ENCODE measurements at regions of chr2 and their contacts with region 1.

Region 1: GRCh38 chr2:134181210-134181609 is 72.7 kb upstream of the MGAT5 start:
- DNase-seq: peak; percentile 78 to 87 (median 80)
- H3K4me3 ChIP-seq: peak overlapping the region in 1 of 2 donors; percentile 20
- H3K4me3 Mint-ChIP-seq: peak overlapping the region; percentile 46 to 81 (median 68)
- H3K27ac ChIP-seq: peak overlapping the region; percentile 25
- H3K27ac Mint-ChIP-seq: peak overlapping the region; percentile 89 to 97 (median 93)
- H3K4me1 ChIP-seq: peaks cover 97% of the 10 kb centered on the region
- H3K4me1 Mint-ChIP-seq: peaks cover 83 to 98% (median 90%) of the 10 kb centered on the region in 4 donors
- H3K27me3 ChIP-seq: no peaks in the 10 kb centered on the region
- H3K27me3 Mint-ChIP-seq: no peaks in the 10 kb centered on the region

Region 2: GRCh38 chr2:134137182-134137611 is 44.0 kb before region 1 on chr2:
- CTCF ChIA-PET with region 1: no interaction called
- POLR2A ChIA-PET with region 1: interaction called, 3 read pairs
- intact Hi-C with region 1: loop called (anchors 5 kb)
- DNase-seq: no peak
- H3K4me3 ChIP-seq: no peak overlapping the region
- H3K4me3 Mint-ChIP-seq: peak overlapping the region; percentile 32 to 88 (median 77)
- H3K27ac ChIP-seq: no peak overlapping the region
- H3K27ac Mint-ChIP-seq: peak overlapping the region in 5 of 7 donors; percentile 68 to 91 (median 82)
- H3K4me1 ChIP-seq: peaks cover 92% of the 10 kb centered on the region
- H3K4me1 Mint-ChIP-seq: peaks cover 79 to 99% (median 88%) of the 10 kb centered on the region in 4 donors
- H3K27me3 ChIP-seq: no peaks in the 10 kb centered on the region
- H3K27me3 Mint-ChIP-seq: no peaks in the 10 kb centered on the region

Region 3: DNA sequence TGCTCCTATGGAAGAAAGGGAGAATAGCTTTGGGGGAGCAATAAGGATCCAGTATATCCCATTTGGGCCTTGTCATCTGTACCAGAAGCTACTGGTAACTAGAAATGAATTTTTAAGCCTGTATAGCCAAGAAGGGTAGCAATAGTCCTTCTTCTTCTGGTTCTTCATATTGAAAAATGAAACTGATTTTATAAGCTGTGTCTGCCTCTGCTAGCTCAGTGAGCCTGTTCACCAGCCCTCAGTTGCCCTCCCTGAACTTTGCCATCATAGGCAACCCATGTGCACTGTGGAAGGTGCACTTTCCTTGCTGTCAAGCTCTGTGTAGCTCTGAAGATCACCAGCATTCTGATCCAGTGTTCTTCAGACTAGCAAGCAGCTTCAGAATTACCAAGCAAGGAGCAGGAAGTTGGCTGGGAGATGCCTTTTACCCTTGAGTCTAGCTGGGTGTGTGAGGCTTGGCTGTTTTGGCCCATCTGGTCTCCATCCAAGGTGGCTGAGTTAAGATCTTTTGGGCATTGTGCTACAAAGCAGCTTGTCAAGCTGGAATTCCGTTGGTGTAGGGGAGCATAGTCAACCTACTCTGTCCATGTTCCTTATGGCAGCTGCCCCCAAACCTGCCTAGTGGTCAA is 16.9 kb after region 1 on chr2:
- CTCF ChIA-PET with region 1: interaction called, 12 read pairs
- POLR2A ChIA-PET with region 1: interaction called, 17 read pairs
- intact Hi-C with region 1: loop called (anchors 2 kb)
- DNase-seq: no peak
- H3K4me3 ChIP-seq: no peak overlapping the region
- H3K4me3 Mint-ChIP-seq: peak overlapping the region; percentile 18 to 82 (median 74)
- H3K27ac ChIP-seq: no peak overlapping the region
- H3K27ac Mint-ChIP-seq: peak overlapping the region; percentile 72 to 88 (median 83)
- H3K4me1 ChIP-seq: peaks cover 87% of the 10 kb centered on the region
- H3K4me1 Mint-ChIP-seq: peaks cover 73 to 94% (median 84%) of the 10 kb centered on the region in 4 donors
- H3K27me3 ChIP-seq: no peaks in the 10 kb centered on the region
- H3K27me3 Mint-ChIP-seq: no peaks in the 10 kb centered on the region

Region 4: GRCh38 chr2:134218930-134219658 is 37.9 kb after region 1 on chr2:
- CTCF ChIA-PET with region 1: interaction called, 3 read pairs
- POLR2A ChIA-PET with region 1: interaction called, 12 read pairs
- intact Hi-C with region 1: loop called (anchors 5 kb)
- DNase-seq: peak in 4 of 5 donors; percentile 40 to 56 (median 48)
- H3K4me3 ChIP-seq: peak overlapping the region; percentile 12 to 13
- H3K4me3 Mint-ChIP-seq: peak overlapping the region; percentile 80 to 90 (median 84)
- H3K27ac ChIP-seq: peak overlapping the region; percentile 41
- H3K27ac Mint-ChIP-seq: peak overlapping the region; percentile 85 to 97 (median 90)
- H3K4me1 ChIP-seq: peaks cover 60% of the 10 kb centered on the region
- H3K4me1 Mint-ChIP-seq: peaks cover 65 to 78% (median 71%) of the 10 kb centered on the region in 4 donors
- H3K27me3 ChIP-seq: no peaks in the 10 kb centered on the region
- H3K27me3 Mint-ChIP-seq: no peaks in the 10 kb centered on the region

Region 5: GRCh38 chr2:134232868-134233727 is 51.9 kb after region 1 on chr2:
- CTCF ChIA-PET with region 1: interaction called, 3 read pairs
- POLR2A ChIA-PET with region 1: interaction called, 10 read pairs
- intact Hi-C with region 1: no loop called
- DNase-seq: peak; percentile 65 to 77 (median 69)
- H3K4me3 ChIP-seq: peak overlapping the region in 1 of 2 donors; percentile 30
- H3K4me3 Mint-ChIP-seq: peak overlapping the region; percentile 56 to 86 (median 78)
- H3K27ac ChIP-seq: peak overlapping the region; percentile 55
- H3K27ac Mint-ChIP-seq: peak overlapping the region; percentile 83 to 97 (median 92)
- H3K4me1 ChIP-seq: peaks cover 94% of the 10 kb centered on the region
- H3K4me1 Mint-ChIP-seq: peaks cover 75 to 94% (median 87%) of the 10 kb centered on the region in 4 donors
- H3K27me3 ChIP-seq: no peaks in the 10 kb centered on the region
- H3K27me3 Mint-ChIP-seq: no peaks in the 10 kb centered on the region